Lower leg skin (tissue), 4 donors: ENCODE measurements at regions of chr7 and their contacts with region 1.

Region 1: GRCh38 chr7:155598810-155599210 is 45.7 kb upstream of the RBM33 start:
- DNase-seq: peak; percentile 66 to 93
- H3K4me3 ChIP-seq: no peak overlapping the region
- CTCF ChIP-seq: peak in 1 of 3 donors; percentile 85
- POLR2A ChIP-seq: no peak

Region 2: GRCh38 chr7:155549226-155549625 is 49.6 kb before region 1 on chr7:
- intact Hi-C with region 1: loop called (anchors 2 kb)
- DNase-seq: no peak
- H3K4me3 ChIP-seq: no peak overlapping the region
- CTCF ChIP-seq: no peak
- POLR2A ChIP-seq: no peak

Region 3: DNA sequence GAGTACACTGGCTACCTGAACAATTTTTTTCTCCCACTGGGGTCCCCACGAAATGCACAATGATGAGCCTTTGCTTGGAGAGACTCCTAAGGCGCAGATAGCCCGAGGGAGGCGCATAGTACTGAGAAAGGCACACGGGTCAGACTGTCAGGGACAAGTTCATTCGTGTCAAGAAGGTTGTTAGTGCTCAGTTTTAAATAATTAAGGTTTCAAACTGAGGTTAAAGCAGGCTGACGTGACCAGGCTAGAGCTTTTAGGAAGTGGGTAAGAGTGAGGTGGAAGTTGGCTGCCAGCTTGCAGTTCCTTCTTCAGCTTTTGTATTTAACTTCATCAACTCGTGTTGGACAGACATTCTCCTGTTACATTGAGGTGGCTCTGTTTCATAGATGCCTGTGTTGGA is 77.2 kb after region 1 on chr7:
- intact Hi-C with region 1: no loop called
- DNase-seq: no peak
- H3K4me3 ChIP-seq: no peak overlapping the region
- CTCF ChIP-seq: no peak
- POLR2A ChIP-seq: no peak

Region 4: DNA sequence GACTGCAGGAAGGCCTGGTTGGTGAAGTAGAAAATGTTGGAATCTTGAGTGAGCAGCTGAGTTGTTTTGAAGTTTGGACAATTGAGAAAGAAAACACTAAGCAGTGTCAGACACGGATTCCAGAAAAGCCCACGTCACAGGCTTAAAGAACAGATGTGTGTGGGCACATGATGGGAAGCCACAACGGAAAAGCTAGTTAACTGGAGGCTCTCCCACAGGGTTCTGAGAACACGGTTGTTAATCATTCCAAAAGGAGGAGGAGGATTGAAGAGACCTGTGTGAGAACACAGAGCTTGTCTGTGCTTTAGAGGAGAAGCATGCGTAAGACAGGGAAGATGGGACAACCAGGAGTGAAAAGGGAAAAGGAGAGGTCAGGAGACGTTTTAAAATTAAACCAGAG is 170.9 kb after region 1 on chr7:
- intact Hi-C with region 1: loop called (anchors 5 kb)
- DNase-seq: no peak
- H3K4me3 ChIP-seq: no peak overlapping the region
- CTCF ChIP-seq: no peak
- POLR2A ChIP-seq: no peak

Region 5: DNA sequence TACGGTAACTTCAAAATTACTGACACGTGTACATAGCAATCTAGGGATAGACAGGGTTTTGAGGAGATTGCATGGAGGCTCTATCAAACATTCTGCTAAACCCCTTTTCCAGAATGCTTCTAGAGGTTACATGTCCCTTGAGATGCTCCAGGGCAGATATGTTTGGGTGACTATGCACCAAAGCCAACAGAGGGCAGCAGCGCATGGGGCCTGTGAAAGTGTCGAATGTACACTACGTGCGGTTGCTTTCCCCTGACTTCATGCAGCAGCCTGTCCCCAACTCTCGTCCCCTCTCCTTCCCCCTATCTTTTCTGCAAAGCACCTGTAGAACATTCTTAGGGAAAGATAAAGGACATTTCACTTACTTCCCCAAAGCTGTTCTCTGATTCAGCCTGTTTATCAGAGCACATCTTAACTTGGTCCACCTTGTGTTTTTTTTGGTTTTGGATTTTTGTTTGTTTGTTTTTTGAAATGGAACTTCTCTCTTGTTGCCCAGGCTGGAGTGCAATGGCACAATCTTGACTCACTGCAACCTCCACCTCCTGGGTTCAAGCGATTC is 1630.1 kb after region 1 on chr7:
- intact Hi-C with region 1: no loop called
- DNase-seq: no peak
- H3K4me3 ChIP-seq: no peak overlapping the region
- CTCF ChIP-seq: no peak
- POLR2A ChIP-seq: no peak